GM10248 (cell line): ENCODE measurements at regions of chr7 and their contacts with region 1.

Region 1: DNA sequence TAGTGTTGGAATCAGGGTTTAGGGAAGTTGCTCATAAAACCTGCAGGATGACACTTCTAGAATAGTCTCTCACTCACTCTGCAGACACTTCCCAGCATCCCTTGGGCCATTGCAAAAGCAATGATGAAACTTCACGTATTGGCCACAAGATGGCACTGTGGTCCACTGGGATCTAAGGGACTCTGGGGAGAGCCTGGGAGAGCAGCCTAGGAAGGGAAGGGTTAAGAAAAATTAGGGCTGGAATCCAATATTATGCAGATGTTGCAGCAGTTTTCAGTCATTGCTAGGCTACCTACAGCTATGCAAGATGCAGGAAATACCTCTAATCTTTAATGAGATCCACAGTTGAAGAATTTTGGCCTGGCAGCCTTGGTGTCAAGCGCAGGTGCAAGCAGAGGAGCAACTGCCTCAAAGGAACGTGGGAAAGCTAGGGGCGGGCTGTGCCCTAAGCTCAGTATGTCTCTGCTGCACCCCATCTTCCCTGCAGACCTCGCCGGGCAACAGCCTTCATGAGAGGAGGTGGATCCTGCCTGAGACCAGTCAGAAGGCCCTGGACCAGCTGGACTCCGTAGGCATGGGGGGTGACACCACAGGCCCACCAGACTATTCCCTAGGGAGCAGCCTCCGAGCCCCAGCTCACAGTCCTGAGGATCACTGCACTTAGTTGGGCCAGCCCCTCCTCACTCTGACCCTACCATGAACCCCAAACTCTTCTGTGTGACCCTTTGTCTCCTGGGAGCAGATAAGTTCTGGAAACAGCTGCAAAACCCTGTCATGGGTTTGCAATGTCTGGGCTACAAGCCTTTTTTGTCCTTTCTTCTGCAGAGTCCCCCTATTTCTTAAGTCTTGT is 127.9 kb upstream of the PRSS58 start:
- DNase-seq: peak; percentile 47
- CTCF ChIP-seq: peak; percentile 73

Region 2: GRCh38 chr7:142357953-142358520 is 27.7 kb before region 1 on chr7:
- CTCF ChIA-PET with region 1: interaction called, 18 read pairs
- POLR2A ChIA-PET with region 1: no interaction called
- DNase-seq: peak; percentile 59
- CTCF ChIP-seq: peak; percentile 84

Region 3: DNA sequence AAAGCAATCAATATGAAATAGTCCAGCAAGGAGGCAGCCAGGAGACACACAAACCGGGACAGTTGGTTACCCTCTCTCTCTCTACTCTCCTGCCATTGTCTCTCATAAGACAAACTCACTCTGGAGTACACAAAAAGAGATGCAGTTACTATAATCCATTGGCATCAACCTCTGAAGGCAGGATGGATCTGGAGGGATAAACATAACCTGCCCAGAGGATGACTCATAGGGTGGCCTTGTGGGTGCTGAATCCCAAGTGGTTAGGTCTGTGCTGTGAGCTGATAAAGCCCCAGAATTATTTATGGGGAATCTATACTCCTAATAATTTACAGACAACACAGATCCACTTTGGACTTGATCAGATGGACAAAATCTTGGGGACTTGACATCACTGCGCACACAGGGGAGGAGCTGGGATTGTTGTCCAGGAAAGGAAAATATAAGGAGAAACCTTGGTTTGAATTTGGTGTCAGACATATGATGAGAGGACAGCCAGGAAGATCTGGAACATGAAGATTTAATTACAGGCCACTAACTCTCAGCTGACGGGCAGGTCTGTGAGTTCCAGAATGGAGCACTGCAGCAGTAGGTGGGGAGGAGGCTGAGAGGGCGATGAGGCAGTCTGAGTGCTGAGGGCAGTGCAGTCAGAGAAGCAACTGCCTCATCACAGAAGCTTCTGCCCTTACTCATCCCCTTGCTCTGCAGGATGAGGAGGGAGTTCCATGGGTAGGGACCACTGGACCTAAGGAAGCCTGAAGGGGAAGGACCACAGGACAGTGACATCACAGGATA is 13.9 kb before region 1 on chr7:
- CTCF ChIA-PET with region 1: interaction called, 10 read pairs
- POLR2A ChIA-PET with region 1: no interaction called
- DNase-seq: no peak
- CTCF ChIP-seq: no peak

Region 4: GRCh38 chr7:142400042-142400533 is 14.4 kb after region 1 on chr7:
- CTCF ChIA-PET with region 1: interaction called, 23 read pairs
- POLR2A ChIA-PET with region 1: no interaction called
- DNase-seq: no peak
- CTCF ChIP-seq: no peak

Region 5: GRCh38 chr7:142412551-142413193 is 27.0 kb after region 1 on chr7:
- CTCF ChIA-PET with region 1: interaction called, 11 read pairs
- POLR2A ChIA-PET with region 1: no interaction called
- DNase-seq: peak; percentile 58
- CTCF ChIP-seq: peak; percentile 68

Region 6: GRCh38 chr7:142438235-142438922 is 52.7 kb after region 1 on chr7:
- CTCF ChIA-PET with region 1: interaction called, 11 read pairs
- POLR2A ChIA-PET with region 1: no interaction called
- DNase-seq: peak; percentile 43
- CTCF ChIP-seq: peak; percentile 58

Region 7: DNA sequence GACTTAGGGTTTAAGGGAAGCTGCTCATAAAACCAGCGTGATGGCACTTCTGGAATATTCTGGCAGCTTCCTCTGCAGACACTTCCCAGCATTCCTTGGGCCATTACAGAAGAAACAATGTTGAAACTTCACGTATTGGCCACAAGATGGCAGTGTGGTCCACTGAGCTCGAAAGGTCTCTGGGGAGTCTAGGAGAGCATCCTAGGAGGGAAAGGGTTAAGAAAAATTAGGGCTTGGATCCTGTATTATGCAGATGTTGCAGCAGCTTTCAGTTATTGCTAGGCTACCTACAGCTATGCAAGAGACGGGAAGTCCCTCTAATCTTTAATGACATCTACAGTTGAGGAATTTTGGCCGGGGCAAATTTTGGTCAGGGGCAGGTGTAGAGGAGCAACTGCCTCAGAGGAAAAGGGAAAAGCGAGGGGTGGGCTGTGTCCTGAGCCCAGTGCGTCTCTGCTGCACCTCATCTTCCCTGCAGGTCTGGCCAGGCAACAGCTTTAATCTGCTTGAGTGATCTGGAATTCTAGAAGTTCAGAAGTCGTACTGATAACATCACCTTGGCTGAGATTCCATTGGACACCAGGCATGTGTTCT is 92.9 kb after region 1 on chr7:
- CTCF ChIA-PET with region 1: interaction called, 11 read pairs
- POLR2A ChIA-PET with region 1: no interaction called
- DNase-seq: peak; percentile 31
- CTCF ChIP-seq: peak; percentile 68